ENCODE measurements at regions of chr5 and their contacts with region 1.

Region 1: DNA sequence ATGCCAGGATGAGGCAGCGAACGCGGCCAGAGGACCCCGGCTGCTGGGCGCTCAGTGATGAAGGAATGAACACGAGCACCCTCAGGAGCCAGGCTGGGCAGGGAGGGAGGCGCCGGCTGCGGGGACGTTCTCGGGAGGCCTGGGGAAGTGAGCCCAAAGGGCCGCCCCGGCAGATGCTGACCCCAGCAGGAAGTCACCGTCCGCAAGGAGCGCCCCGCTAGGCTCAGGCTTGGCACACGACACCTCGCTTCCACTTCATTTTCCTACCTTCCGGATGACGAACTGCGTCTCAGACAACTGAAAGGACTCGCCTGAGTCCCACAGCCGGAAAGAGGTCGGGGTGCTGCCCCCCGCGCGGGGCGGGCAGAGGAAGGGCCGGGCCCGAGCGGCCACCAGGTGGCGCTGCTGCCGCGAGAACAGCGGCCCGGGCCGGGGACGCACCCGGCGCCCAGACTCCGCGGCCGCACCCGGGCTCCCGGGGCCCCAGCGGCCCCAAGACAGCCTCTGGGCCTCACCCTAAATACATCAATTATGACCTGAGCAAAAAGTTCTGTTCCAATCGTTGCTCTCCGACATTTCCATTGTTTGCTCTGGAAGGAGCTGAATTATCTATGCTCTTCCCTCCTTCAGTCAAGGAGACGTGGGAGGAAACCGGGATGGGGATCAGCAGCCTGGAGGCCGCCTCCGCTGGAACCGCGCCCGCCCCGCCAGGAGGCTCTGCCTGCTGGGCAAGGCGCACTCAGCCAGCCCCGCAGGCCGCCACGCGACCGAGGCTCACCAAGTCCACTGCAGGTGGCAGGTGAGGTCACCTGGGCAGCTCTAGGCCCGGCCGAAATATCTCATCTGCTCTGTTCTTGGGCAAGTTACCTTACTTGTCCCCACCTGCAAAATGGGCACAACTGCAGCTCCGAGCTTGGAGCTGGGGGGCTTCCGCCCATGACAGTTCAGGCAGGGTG is 107.0 kb downstream of the ZNF354C start:
- DNase-seq: peak; percentile 47 to 72 (median 52)
- ATAC-seq: peak; percentile 24 to 89 (median 68)
- H3K4me3 ChIP-seq: peak overlapping the region in 10 of 12 donors; percentile 16 to 51 (median 40)
- H3K27ac ChIP-seq: no peak overlapping the region
- H3K4me1 ChIP-seq: peaks cover 0 to 13% (median 7%) of the 10 kb centered on the region in 12 donors
- H3K27me3 ChIP-seq: peaks cover 0 to 17% (median 4%) of the 10 kb centered on the region in 9 donors
- CTCF ChIP-seq: peak; percentile 80 to 99 (median 95)
- POLR2A ChIP-seq: no peak

Region 2: GRCh38 chr5:179265514-179266290 is 98.5 kb after region 1 on chr5:
- intact Hi-C with region 1: loop called in 1 of 10 experiments (anchors 5 kb)
- DNase-seq: peak; percentile 88 to 95 (median 93)
- ATAC-seq: peak; percentile 83 to 95 (median 94)
- H3K4me3 ChIP-seq: peak overlapping the region in 6 of 12 donors; percentile 5 to 30 (median 14)
- H3K27ac ChIP-seq: peak overlapping the region in 8 of 12 donors; percentile 30 to 78 (median 59)
- H3K4me1 ChIP-seq: peaks cover 0 to 55% (median 22%) of the 10 kb centered on the region in 12 donors
- H3K27me3 ChIP-seq: peaks cover 0 to 3% (median 0%) of the 10 kb centered on the region in 9 donors
- CTCF ChIP-seq: no peak
- POLR2A ChIP-seq: no peak

Region 3: GRCh38 chr5:179345433-179346321 is 178.5 kb after region 1 on chr5 and contains the start of gene ADAMTS2:
- intact Hi-C with region 1: loop called in 8 of 10 experiments (anchors 5 to 10 kb)
- DNase-seq: peak; percentile 54 to 84 (median 68)
- ATAC-seq: peak in 3 of 4 donors; percentile 36 to 74 (median 69)
- H3K4me3 ChIP-seq: peak within 1 kb of the TSS; percentile 44 to 71 (median 56)
- H3K27ac ChIP-seq: peak within 1 kb of the TSS in 8 of 12 donors; percentile 23 to 61 (median 46)
- H3K4me1 ChIP-seq: peaks cover 0 to 35% (median 16%) of the 10 kb centered on the region in 12 donors
- H3K27me3 ChIP-seq: peaks cover 16 to 56% (median 34%) of the 10 kb centered on the region in 9 donors
- CTCF ChIP-seq: peak in 1 of 12 donors; percentile 16
- POLR2A ChIP-seq: no peak
- total RNA-seq, gene ADAMTS2: 1.1 to 23.0 (median 5.5) TPM

Region 4: GRCh38 chr5:179355976-179356974 is 189.1 kb after region 1 on chr5:
- intact Hi-C with region 1: loop called in 1 of 10 experiments (anchors 10 kb)
- DNase-seq: peak in 1 of 5 donors; percentile 16
- ATAC-seq: peak in 2 of 4 donors; percentile 53 to 84
- H3K4me3 ChIP-seq: no peak overlapping the region
- H3K27ac ChIP-seq: peak overlapping the region in 4 of 12 donors; percentile 24 to 45 (median 34)
- H3K4me1 ChIP-seq: peaks cover 0 to 36% (median 0%) of the 10 kb centered on the region in 12 donors
- H3K27me3 ChIP-seq: no peaks in the 10 kb centered on the region
- CTCF ChIP-seq: no peak
- POLR2A ChIP-seq: no peak

Region 5: GRCh38 chr5:179404321-179405053 is 237.3 kb after region 1 on chr5:
- intact Hi-C with region 1: loop called in 2 of 10 experiments (anchors 2 to 5 kb)
- DNase-seq: no peak
- ATAC-seq: peak in 2 of 4 donors; percentile 53 to 71
- H3K4me3 ChIP-seq: no peak overlapping the region
- H3K27ac ChIP-seq: no peak overlapping the region
- H3K4me1 ChIP-seq: peaks cover 0 to 18% (median 0%) of the 10 kb centered on the region in 12 donors
- H3K27me3 ChIP-seq: no peaks in the 10 kb centered on the region
- CTCF ChIP-seq: peak in 11 of 12 donors; percentile 8 to 36 (median 32)
- POLR2A ChIP-seq: no peak

Region 6: DNA sequence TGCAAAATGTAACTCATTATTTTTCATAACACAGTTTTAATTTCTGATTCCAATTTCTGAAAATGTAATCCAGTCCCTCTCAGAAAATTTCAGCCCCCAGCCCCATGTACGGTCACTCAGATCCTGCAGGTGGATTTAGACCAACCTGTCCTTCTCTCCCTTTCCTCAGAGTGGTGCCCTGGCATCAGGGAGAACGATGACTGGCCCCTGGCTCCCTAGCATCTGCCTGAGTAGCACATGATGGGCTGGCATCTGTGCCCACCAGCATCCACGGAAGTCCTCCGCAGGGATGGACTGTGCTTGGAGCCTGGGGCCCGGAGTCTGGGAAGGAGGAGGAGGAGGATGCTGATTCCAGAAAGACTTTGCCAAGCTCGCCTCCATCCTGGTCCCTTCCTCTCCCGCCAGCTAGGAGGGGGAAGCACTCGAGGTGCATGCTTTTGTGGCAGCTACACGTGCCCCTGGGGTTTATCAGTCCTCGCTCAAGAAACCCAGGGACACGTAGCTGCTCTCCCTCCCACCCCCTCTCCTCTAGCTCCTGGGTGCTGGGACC is 328.8 kb after region 1 on chr5:
- intact Hi-C with region 1: loop called in 9 of 10 experiments (anchors 1 to 2 kb)
- DNase-seq: no peak
- ATAC-seq: no peak
- H3K4me3 ChIP-seq: no peak overlapping the region
- H3K27ac ChIP-seq: no peak overlapping the region
- H3K4me1 ChIP-seq: no peaks in the 10 kb centered on the region
- H3K27me3 ChIP-seq: peaks cover 0 to 11% (median 0%) of the 10 kb centered on the region in 9 donors
- CTCF ChIP-seq: no peak
- POLR2A ChIP-seq: no peak

Region 7: DNA sequence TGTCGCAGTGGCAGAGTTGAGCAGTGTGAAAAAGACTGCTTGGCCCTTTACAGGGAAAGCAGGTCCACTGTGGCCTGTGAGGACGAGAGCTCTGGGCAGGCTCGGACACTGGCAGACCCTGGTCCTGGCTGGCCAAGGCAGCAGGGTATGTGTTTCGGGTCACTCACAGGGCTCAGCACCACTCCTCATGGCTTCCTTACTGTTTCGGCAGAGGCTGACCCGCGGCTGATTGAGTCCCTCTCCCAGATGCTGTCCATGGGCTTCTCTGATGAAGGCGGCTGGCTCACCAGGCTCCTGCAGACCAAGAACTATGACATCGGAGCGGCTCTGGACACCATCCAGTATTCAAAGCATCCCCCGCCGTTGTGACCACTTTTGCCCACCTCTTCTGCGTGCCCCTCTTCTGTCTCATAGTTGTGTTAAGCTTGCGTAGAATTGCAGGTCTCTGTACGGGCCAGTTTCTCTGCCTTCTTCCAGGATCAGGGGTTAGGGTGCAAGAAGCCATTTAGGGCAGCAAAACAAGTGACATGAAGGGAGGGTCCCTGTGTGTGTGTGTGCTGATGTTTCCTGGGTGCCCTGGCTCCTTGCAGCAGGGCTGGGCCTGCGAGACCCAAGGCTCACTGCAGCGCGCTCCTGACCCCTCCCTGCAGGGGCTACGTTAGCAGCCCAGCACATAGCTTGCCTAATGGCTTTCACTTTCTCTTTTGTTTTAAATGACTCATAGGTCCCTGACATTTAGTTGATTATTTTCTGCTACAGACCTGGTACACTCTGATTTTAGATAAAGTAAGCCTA is 669.3 kb after region 1 on chr5:
- intact Hi-C with region 1: no loop called
- DNase-seq: peak in 1 of 5 donors; percentile 63
- ATAC-seq: peak in 3 of 4 donors; percentile 21 to 55 (median 33)
- H3K4me3 ChIP-seq: no peak overlapping the region
- H3K27ac ChIP-seq: peak overlapping the region in 3 of 12 donors; percentile 28 to 70 (median 33)
- H3K4me1 ChIP-seq: peaks cover 0 to 23% (median 4%) of the 10 kb centered on the region in 12 donors
- H3K27me3 ChIP-seq: no peaks in the 10 kb centered on the region
- CTCF ChIP-seq: no peak
- POLR2A ChIP-seq: no peak

Measured in heart left ventricle (tissue), 16 donors.